ENCODE measurements at regions of chr3 and their contacts with region 1.

Region 1: DNA sequence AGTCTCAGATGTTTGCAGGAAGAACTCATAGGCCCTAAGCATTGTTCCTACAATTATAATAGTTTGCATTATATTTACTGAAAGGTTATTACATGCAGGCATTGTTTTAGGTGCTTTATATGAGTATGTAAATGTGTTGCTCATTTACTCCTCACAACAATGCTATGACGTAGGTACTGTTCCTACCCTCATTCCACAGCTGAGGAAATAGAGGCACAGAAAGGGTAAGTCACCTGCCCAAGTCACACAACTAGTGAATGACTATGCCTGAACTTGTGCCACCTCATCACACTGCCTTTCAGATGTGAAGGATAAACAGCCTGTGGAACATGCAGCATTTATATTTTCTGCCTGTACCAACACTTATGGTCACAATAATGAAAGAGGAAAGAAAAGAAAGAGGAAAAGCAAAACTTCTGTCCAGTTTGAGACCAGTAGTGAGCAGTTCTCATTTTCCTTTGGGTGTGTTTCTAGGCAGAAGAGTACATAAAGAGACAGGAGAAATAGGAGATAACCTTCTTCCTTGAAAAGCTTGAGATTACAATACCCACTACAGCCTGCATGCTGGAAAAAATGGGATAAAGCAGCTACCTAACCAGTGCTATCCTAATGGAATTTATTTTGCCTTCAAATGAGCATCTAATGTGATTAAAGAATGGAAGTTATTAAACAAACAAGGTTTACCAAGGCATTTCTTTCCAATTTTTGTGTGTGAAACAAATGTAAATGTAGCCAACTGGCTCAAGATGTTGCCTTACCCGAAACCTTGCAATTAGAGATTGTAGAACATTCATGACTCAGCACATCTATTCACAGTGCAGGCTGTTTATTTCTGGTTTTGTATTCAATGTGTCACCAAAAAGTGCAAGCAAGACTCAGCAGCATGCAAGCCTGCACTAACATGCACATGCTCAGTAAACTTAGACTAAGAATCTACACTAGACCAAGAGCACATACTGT is 20.5 kb upstream of the ENTPD3 start:
- DNase-seq: no peak
- ATAC-seq: no peak
- H3K4me3 ChIP-seq: no peak overlapping the region
- H3K4me3 Mint-ChIP-seq: no peak overlapping the region
- H3K27ac ChIP-seq: no peak overlapping the region
- H3K27ac Mint-ChIP-seq: no peak overlapping the region
- H3K4me1 ChIP-seq: no peaks in the 10 kb centered on the region
- H3K4me1 Mint-ChIP-seq: no peaks in the 10 kb centered on the region
- H3K27me3 ChIP-seq: no peaks in the 10 kb centered on the region
- H3K27me3 Mint-ChIP-seq: peaks cover 27% of the 10 kb centered on the region
- CTCF ChIP-seq: no peak

Region 2: DNA sequence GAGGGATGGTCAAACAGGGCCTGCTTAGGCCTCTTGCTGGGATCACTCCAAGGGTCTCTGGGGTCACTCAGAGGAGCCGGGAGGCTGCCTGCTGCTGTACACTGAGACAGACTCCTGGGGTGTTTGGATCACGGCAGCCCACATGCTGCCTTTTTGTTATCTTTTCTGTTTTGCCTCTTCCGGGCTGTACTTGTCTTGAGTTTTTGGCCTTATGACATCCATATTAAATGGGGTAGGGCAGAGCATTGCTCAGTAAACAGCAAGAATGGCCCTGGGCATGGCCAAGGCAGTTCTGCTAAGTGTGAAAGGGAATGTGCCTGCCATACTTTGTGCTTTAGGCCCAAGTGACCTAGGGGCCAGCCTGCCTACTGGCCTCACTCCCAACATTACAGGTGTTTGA is 19.7 kb after region 1 on chr3:
- CTCF ChIA-PET with region 1: no interaction called
- POLR2A ChIA-PET with region 1: no interaction called
- intact Hi-C with region 1: loop called in 1 of 2 experiments (anchors 1 kb)
- DNase-seq: no peak
- ATAC-seq: no peak
- H3K4me3 ChIP-seq: no peak overlapping the region
- H3K4me3 Mint-ChIP-seq: peak overlapping the region; percentile 77
- H3K27ac ChIP-seq: no peak overlapping the region
- H3K27ac Mint-ChIP-seq: no peak overlapping the region
- H3K4me1 ChIP-seq: peaks cover 7% of the 10 kb centered on the region
- H3K4me1 Mint-ChIP-seq: peaks cover 7% of the 10 kb centered on the region
- H3K27me3 ChIP-seq: peaks cover 3 to 12% of the 10 kb centered on the region in 2 experiments
- H3K27me3 Mint-ChIP-seq: peaks cover 34% of the 10 kb centered on the region
- CTCF ChIP-seq: no peak

Region 3: DNA sequence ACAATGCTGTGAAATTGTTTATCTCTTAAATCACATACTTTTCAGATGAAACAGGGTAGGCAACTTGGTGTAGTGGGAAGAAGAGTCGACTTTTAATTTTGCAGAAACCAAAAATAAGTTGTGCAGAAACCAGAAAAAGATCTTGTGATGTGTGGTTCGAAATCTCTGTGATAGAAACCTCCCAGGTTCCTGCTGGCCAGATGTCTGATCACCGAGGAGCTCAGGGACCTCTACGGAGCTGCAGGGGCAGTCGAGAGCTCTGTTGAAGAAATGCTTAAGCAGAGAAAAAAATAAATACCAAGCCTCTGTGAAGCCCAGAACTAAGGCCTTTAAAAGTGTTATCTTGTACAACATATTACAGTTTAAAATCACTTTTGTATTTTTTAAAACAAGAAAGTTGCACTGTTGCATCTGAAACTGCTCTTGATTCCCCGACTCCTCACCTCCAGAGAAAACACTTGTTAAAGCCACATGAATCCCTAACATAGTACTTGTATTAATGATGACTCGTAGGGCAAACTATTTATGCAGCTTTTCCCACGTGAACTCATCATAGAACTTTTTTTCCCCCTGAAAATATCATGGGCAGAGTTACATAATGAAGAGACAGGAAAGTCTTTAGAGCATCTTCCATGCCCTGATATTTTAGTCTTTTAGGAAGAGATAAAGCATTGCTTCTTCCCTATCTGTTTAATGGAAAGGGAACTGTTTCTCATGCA is 1848.2 kb after region 1 on chr3:
- CTCF ChIA-PET with region 1: no interaction called
- POLR2A ChIA-PET with region 1: no interaction called
- intact Hi-C with region 1: no loop called
- DNase-seq: peak in 1 of 9 experiments; percentile 32
- ATAC-seq: no peak
- H3K4me3 ChIP-seq: peak overlapping the region in 1 of 2 experiments; percentile 22
- H3K4me3 Mint-ChIP-seq: peak overlapping the region; percentile 30
- H3K27ac ChIP-seq: peak overlapping the region; percentile 28 to 63
- H3K27ac Mint-ChIP-seq: peak overlapping the region; percentile 78
- H3K4me1 ChIP-seq: peaks cover 60% of the 10 kb centered on the region
- H3K4me1 Mint-ChIP-seq: peaks cover 66% of the 10 kb centered on the region
- H3K27me3 ChIP-seq: no peaks in the 10 kb centered on the region
- H3K27me3 Mint-ChIP-seq: no peaks in the 10 kb centered on the region
- CTCF ChIP-seq: no peak